ENCODE measurements at regions of chr6 and their contacts with region 1.

Region 1: GRCh38 chr6:37222125-37222967 is 35.2 kb upstream of the TBC1D22B start:
- DNase-seq: peak; percentile 77
- H3K4me3 Mint-ChIP-seq: peak overlapping the region; percentile 79
- H3K27ac Mint-ChIP-seq: peak overlapping the region; percentile 80
- H3K4me1 Mint-ChIP-seq: peaks cover 51% of the 10 kb centered on the region
- H3K27me3 Mint-ChIP-seq: no peaks in the 10 kb centered on the region

Region 2: GRCh38 chr6:37239950-37240713 is 17.8 kb after region 1 on chr6:
- intact Hi-C with region 1: loop called (anchors 1 kb)
- DNase-seq: peak; percentile 49
- H3K4me3 Mint-ChIP-seq: peak overlapping the region; percentile 38
- H3K27ac Mint-ChIP-seq: peak overlapping the region; percentile 90
- H3K4me1 Mint-ChIP-seq: peaks cover 64% of the 10 kb centered on the region
- H3K27me3 Mint-ChIP-seq: no peaks in the 10 kb centered on the region

Region 3: GRCh38 chr6:37289931-37290330 is 67.6 kb after region 1 on chr6:
- intact Hi-C with region 1: loop called (anchors 2 kb)
- DNase-seq: peak; percentile 54
- H3K4me3 Mint-ChIP-seq: peak overlapping the region; percentile 55
- H3K27ac Mint-ChIP-seq: peak overlapping the region; percentile 89
- H3K4me1 Mint-ChIP-seq: peaks cover 49% of the 10 kb centered on the region
- H3K27me3 Mint-ChIP-seq: no peaks in the 10 kb centered on the region

Region 4: GRCh38 chr6:37314487-37315156 is 92.3 kb after region 1 on chr6:
- intact Hi-C with region 1: loop called (anchors 1 kb)
- DNase-seq: peak; percentile 35
- H3K4me3 Mint-ChIP-seq: no peak overlapping the region
- H3K27ac Mint-ChIP-seq: peak overlapping the region; percentile 32
- H3K4me1 Mint-ChIP-seq: peaks cover 28% of the 10 kb centered on the region
- H3K27me3 Mint-ChIP-seq: no peaks in the 10 kb centered on the region

Measured in activated T-helper 1 cell treated with anti-CD3 and anti-CD28 coated beads, Interleukin-12 subunit alpha, Interleukin-12 subunit beta, Interleukin-2, Interleukin-4 antibody, amounts not matched to agents 30 ng/mL and 10 ng/mL and 1 ng/mL, durations not matched to agents 14 hours and 24 hours and 36 hours (primary cell).